Activated B cell treated with CpG ODN at 0.5 μM for 24 hours (primary cell): ENCODE measurements at regions of chr12 and their contacts with region 1.

Region 1: DNA sequence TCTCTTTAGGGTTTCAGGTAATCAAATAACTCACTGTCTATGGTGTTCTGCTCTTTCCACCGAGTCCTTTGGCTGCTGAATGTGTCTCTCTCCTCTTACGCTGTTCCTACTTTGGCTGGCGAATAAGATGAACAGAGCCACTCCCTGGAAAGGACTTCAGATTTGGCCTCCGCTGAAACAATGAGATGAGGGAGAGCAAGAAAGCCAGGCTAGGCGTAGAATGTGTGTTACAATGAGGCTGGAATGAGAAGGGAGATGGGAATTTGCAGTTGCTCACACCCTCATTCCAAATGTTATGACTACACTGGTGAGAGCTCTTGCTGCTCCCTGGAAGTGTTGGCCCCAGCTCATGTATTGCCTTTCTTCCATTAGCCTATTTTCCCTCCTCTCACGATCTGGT is at the start of gene MFAP5:
- DNase-seq: no peak
- ATAC-seq: no peak
- H3K4me3 Mint-ChIP-seq: no peak within 1 kb of the TSS
- H3K27ac Mint-ChIP-seq: no peak within 1 kb of the TSS
- H3K4me1 Mint-ChIP-seq: peaks cover 4% of the 10 kb centered on the region
- H3K27me3 Mint-ChIP-seq: peaks cover 2% of the 10 kb centered on the region
- CTCF ChIP-seq: no peak
- total RNA-seq, gene MFAP5: 0.35 TPM in 1 of 2 replicates, not detected in the other

Region 2: DNA sequence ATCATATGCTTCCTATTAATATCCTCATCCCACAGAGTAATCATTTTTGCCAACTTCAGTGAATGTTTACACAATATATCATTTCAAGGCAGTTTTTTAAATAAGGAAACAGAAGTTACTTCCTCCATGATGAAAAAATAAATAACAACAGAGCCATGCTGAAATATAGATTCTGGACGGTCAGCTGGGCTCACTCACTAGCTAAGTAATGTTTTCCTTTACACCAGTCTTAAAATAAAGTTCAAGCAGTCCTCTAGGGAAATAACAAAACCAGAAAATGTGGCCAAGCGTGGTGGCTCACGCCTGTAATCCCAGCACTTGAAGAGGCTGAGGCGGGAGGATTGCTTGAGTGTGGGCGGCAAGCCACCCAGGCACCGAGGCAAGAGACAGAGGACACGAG is 78.6 kb before region 1 on chr12:
- CTCF ChIA-PET with region 1: no interaction called
- POLR2A ChIA-PET with region 1: no interaction called
- intact Hi-C with region 1: no loop called
- DNase-seq: no peak
- ATAC-seq: no peak
- H3K4me3 Mint-ChIP-seq: no peak overlapping the region
- H3K27ac Mint-ChIP-seq: no peak overlapping the region
- H3K4me1 Mint-ChIP-seq: peaks cover 11% of the 10 kb centered on the region
- H3K27me3 Mint-ChIP-seq: no peaks in the 10 kb centered on the region
- CTCF ChIP-seq: no peak

Region 3: GRCh38 chr12:8622646-8623045 is 39.9 kb before region 1 on chr12:
- CTCF ChIA-PET with region 1: no interaction called
- POLR2A ChIA-PET with region 1: no interaction called
- intact Hi-C with region 1: no loop called
- DNase-seq: no peak
- ATAC-seq: no peak
- H3K4me3 Mint-ChIP-seq: no peak overlapping the region
- H3K27ac Mint-ChIP-seq: no peak overlapping the region
- H3K4me1 Mint-ChIP-seq: peaks cover 6% of the 10 kb centered on the region
- H3K27me3 Mint-ChIP-seq: no peaks in the 10 kb centered on the region
- CTCF ChIP-seq: no peak

Region 4: DNA sequence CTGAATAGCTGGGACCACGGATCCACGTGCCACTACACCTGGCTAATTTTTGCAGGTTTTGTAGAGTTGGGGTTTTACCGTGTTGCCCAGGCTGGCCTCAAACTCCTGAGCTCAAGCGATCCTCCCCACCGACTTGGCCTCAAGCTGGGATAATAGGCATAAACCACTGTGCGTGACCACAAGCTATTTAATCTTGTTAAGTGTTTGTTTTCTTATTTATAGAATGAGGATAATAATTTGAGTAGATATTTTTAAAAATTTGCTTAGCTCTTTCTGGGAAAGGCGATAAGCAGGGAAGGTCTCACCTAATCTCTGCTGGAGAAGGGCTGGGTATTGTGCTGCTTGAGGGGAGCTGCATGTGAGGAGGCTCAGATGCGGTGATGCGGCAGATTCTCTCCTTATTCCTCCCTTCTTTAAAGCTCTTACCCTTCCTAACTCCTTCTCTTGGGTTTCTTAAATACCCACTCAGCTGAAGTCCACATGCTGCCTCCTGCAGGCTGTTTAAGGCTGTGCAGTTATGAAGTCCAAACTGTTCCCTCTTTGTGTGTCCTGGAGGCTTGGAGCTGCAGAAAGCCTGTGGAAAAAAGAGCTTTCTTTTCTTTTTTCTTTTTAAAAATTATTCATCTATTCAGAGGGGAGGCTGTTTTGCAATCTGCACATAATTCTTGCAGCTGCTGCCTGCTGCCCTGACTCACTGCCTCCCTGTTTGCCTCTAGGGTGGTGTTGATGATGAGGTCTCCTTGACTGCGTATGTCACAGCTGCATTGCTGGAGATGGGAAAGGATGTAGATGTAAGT is 197.8 kb after region 1 on chr12:
- CTCF ChIA-PET with region 1: interaction called, 13 read pairs
- POLR2A ChIA-PET with region 1: no interaction called
- intact Hi-C with region 1: loop called (anchors 1 kb)
- DNase-seq: no peak
- ATAC-seq: peak; percentile 34
- H3K4me3 Mint-ChIP-seq: no peak overlapping the region
- H3K27ac Mint-ChIP-seq: no peak overlapping the region
- H3K4me1 Mint-ChIP-seq: no peaks in the 10 kb centered on the region
- H3K27me3 Mint-ChIP-seq: peaks cover 3% of the 10 kb centered on the region
- CTCF ChIP-seq: no peak

Region 5: DNA sequence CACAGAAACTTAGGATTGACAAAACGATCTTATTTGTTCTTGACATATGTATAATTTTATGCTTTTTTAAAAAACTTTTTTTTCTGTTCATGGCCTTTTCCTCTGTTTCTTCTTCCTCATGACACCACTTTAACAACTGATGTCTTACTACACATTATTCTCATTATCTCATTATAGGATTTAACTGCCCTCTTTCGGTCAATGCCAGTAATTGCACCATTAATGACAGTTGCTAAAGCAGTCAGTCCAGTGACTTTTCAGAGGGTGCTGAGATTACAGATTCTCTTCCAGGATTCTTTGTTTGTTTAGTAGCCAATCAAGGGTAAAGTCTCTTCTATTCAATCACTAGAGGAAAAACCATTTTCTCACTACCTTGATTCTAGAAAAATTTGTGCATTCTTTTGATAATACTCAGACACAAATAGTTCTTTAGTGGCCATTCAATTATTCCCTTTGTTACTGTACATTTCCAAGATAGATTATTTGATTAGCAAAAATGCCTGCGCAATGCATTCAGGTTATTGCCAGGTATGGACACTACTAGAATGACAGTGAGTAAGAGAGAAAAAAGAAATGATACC is 376.9 kb after region 1 on chr12:
- CTCF ChIA-PET with region 1: interaction called, 8 read pairs
- POLR2A ChIA-PET with region 1: no interaction called
- intact Hi-C with region 1: loop called (anchors 1 kb)
- DNase-seq: no peak
- ATAC-seq: peak; percentile 69
- H3K4me3 Mint-ChIP-seq: no peak overlapping the region
- H3K27ac Mint-ChIP-seq: no peak overlapping the region
- H3K4me1 Mint-ChIP-seq: no peaks in the 10 kb centered on the region
- H3K27me3 Mint-ChIP-seq: peaks cover 2% of the 10 kb centered on the region
- CTCF ChIP-seq: peak; percentile 63

Region 6: GRCh38 chr12:9049520-9050133 is 387.0 kb after region 1 on chr12:
- CTCF ChIA-PET with region 1: interaction called, 26 read pairs
- POLR2A ChIA-PET with region 1: no interaction called
- intact Hi-C with region 1: loop called (anchors 1 kb)
- DNase-seq: no peak
- ATAC-seq: peak; percentile 60
- H3K4me3 Mint-ChIP-seq: no peak overlapping the region
- H3K27ac Mint-ChIP-seq: no peak overlapping the region
- H3K4me1 Mint-ChIP-seq: no peaks in the 10 kb centered on the region
- H3K27me3 Mint-ChIP-seq: peaks cover 6% of the 10 kb centered on the region
- CTCF ChIP-seq: no peak